Tibial artery (tissue), 4 donors: ENCODE measurements at regions of chr2 and their contacts with region 1.

Region 1: GRCh38 chr2:96856776-96857673 is 791 bp downstream of the ANKRD39 start:
- DNase-seq: no peak
- H3K4me3 ChIP-seq: peak overlapping the region; percentile 77 to 85
- H3K27ac ChIP-seq: peak overlapping the region; percentile 84 to 85
- H3K4me1 ChIP-seq: peaks cover 0 to 37% (median 29%) of the 10 kb centered on the region in 4 donors
- H3K27me3 ChIP-seq: no peaks in the 10 kb centered on the region
- CTCF ChIP-seq: no peak

Region 2: DNA sequence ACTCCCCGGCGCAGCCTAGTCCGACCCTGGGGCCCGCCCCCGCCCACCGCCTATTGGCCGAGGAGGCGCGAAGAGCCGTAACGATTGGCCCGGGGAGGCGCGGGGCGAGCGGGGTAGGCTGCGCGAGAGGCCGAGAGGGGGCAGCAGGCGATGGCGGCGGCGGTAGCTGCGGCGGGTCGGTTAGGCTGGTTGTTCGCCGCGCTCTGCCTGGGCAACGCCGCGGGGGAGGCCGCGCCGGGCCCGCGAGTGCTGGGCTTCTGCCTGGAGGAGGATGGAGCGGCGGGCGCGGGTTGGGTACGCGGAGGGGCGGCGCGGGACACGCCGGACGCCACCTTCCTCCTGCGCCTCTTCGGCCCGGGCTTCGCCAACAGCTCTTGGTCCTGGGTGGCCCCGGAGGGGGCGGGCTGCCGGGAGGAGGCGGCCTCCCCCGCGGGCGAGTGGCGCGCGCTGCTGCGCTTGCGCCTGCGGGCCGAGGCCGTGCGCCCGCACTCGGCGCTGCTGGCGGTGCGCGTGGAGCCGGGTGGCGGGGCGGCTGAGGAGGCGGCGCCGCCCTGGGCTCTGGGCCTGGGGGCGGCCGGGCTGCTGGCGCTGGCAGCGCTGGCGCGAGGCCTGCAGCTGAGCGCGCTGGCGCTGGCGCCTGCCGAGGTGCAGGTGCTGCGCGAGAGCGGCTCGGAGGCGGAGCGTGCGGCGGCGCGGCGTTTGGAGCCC is 40.7 kb before region 1 on chr2 and contains the start of gene CNNM3:
- intact Hi-C with region 1: loop called (anchors 5 kb)
- DNase-seq: peak; percentile 96 to 98
- H3K4me3 ChIP-seq: peak within 1 kb of the TSS; percentile 58 to 85
- H3K27ac ChIP-seq: peak within 1 kb of the TSS; percentile 77 to 95
- H3K4me1 ChIP-seq: peaks cover 0 to 58% (median 41%) of the 10 kb centered on the region in 4 donors
- H3K27me3 ChIP-seq: no peaks in the 10 kb centered on the region
- CTCF ChIP-seq: peak; percentile 66 to 67

Region 3: DNA sequence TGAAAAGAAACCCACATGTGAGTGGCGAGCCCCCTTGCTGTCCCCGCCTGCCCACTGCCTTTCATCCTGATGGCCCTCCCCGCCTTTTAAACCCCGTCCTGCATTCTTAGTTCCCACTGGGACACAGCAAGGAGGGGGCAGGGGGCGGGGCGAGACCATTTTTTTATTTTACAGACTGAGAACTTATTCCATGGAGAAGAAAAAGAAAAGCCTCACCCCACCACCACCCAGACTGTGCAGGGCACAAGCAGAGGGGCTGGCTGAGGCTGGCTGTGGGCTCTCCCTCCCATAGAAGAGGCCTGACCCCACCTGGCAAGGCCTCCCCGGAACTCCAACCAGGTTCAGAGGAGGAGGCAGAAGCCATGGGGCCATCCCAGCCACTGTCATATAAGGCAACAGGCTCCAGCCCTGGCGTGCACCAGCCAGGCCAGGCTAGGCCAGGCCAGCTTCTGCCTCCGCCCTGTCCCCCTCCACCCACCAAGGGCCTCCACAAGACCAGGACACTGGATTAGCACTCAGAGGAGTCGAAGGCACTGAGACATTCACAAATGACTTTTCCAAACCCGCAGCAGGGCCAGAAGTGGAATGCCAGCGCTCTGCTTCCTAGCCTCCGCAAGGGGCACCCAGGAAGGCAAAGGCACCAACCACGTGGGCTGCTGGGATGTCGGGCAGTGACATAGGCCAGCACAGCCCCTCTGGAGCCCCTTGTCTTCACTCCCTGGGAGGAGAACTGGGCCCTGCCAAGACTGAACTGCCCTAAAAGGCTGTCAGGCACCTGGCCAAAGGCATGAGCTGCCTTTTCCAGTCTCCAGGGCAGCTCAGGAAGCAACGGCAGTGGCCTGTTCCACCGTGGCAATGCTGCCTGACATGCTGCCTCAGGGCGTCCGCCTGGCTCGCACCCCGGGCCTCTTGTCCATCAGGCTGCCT is 50.4 kb after region 1 on chr2:
- intact Hi-C with region 1: loop called (anchors 2 kb)
- DNase-seq: peak; percentile 92 to 98
- H3K4me3 ChIP-seq: peak overlapping the region; percentile 42 to 43
- H3K27ac ChIP-seq: peak overlapping the region; percentile 87 to 97
- H3K4me1 ChIP-seq: peaks cover 7 to 55% (median 32%) of the 10 kb centered on the region in 4 donors
- H3K27me3 ChIP-seq: no peaks in the 10 kb centered on the region
- CTCF ChIP-seq: peak in 1 of 2 experiments; percentile 29

Region 4: DNA sequence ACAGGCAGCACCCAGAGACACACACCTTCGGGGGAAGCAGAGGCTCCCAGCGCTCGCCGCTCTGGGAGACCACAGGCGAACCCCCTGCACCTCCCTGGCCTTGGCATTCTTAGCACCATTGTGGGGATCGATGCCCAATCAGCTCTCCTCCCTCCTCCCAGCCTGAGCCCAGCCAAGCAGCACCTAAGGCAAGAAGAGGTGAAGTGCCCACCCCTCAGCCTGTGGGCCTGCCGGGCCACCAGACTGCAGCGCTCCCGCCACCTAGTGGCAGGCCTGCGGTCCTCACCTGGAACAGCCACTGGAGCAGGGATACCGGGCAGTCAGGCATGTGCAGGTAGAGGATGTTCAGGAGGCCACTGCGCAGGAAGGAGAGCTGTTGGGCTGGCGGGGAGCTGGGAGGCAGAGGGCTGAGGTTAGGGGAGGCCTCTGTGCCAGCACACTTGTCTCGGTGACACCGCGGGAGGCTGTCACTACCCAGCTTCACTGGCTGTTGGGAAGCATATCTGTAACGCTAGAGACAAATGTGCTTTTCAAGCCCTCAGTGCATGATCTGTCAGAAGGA is 94.1 kb after region 1 on chr2:
- intact Hi-C with region 1: loop called (anchors 2 kb)
- DNase-seq: peak; percentile 68 to 84
- H3K4me3 ChIP-seq: no peak overlapping the region
- H3K27ac ChIP-seq: no peak overlapping the region
- H3K4me1 ChIP-seq: peaks cover 0 to 18% (median 9%) of the 10 kb centered on the region in 4 donors
- H3K27me3 ChIP-seq: peaks cover 0 to 30% of the 10 kb centered on the region in 2 donors
- CTCF ChIP-seq: peak; percentile 93 to 94